SK-N-SH (cell line): ENCODE measurements at regions of chr10 and their contacts with region 1.

Region 1: GRCh38 chr10:70880077-70880534 is 8.3 kb downstream of the PCBD1 start:
- DNase-seq: peak; percentile 80
- H3K4me3 ChIP-seq: no peak overlapping the region; a peak in 1 of 4 replicates
- H3K27ac ChIP-seq: peak overlapping the region in 1 of 2 experiments; percentile 58; a peak in 2 of 4 replicates
- H3K4me1 ChIP-seq: peaks cover 0 to 26% of the 10 kb centered on the region in 2 experiments; a peak in 2 of 4 replicates
- H3K27me3 ChIP-seq: no peaks in the 10 kb centered on the region
- CTCF ChIP-seq: peak; percentile 95
- EP300 ChIP-seq: no peak
- RAD21 ChIP-seq: peak; percentile 98

Region 2: GRCh38 chr10:70729763-70730352 is 150.2 kb before region 1 on chr10:
- CTCF ChIA-PET with region 1: no interaction called
- POLR2A ChIA-PET with region 1: no interaction called
- DNase-seq: peak; percentile 45
- H3K4me3 ChIP-seq: no peak overlapping the region
- H3K27ac ChIP-seq: no peak overlapping the region; a peak in 1 of 4 replicates
- H3K4me1 ChIP-seq: peaks cover 0 to 29% of the 10 kb centered on the region in 2 experiments; a peak in 1 of 4 replicates
- H3K27me3 ChIP-seq: no peaks in the 10 kb centered on the region
- CTCF ChIP-seq: no peak
- EP300 ChIP-seq: no peak
- RAD21 ChIP-seq: no peak

Region 3: GRCh38 chr10:70808887-70809611 is 71.1 kb before region 1 on chr10:
- CTCF ChIA-PET with region 1: interaction called, 84 read pairs
- POLR2A ChIA-PET with region 1: no interaction called
- DNase-seq: no peak
- H3K4me3 ChIP-seq: no peak overlapping the region
- H3K27ac ChIP-seq: no peak overlapping the region
- H3K4me1 ChIP-seq: peaks cover 0 to 4% of the 10 kb centered on the region in 2 experiments; a peak in 1 of 4 replicates
- H3K27me3 ChIP-seq: no peaks in the 10 kb centered on the region
- CTCF ChIP-seq: no peak
- EP300 ChIP-seq: no peak
- RAD21 ChIP-seq: no peak

Region 4: DNA sequence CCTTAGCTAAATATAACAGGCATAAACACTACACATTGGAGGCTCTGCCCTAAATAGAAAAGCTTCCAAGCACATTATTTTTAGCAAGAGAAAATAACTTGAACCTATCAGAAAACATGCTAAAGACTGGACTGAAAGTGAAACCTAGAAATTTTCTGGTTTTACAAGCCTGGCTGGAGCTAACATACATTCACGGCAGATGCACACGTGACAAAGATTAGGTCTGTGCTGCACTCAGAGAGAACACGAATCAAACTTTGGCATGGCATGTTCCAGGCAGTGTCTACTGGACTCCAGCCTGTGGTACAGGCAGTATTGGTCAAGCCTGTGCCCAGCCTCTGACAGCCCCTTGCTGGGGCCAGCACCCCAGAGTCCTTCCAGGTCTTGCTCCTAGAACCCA is 102.3 kb after region 1 on chr10:
- CTCF ChIA-PET with region 1: no interaction called
- POLR2A ChIA-PET with region 1: no interaction called
- DNase-seq: no peak
- H3K4me3 ChIP-seq: no peak overlapping the region
- H3K27ac ChIP-seq: no peak overlapping the region
- H3K4me1 ChIP-seq: no peaks in the 10 kb centered on the region; a peak in 1 of 4 replicates
- H3K27me3 ChIP-seq: no peaks in the 10 kb centered on the region; the same call in 1 of the 2 replicates
- CTCF ChIP-seq: no peak
- EP300 ChIP-seq: no peak
- RAD21 ChIP-seq: no peak